ENCODE measurements at regions of chr10 and their contacts with region 1.

Region 1: GRCh38 chr10:102072673-102073527 is 7.8 kb downstream of the HPS6 start:
- DNase-seq: peak; percentile 88
- H3K4me3 ChIP-seq: no peak overlapping the region
- H3K27ac ChIP-seq: no peak overlapping the region
- H3K4me1 ChIP-seq: peaks cover 7% of the 10 kb centered on the region
- H3K27me3 ChIP-seq: no peaks in the 10 kb centered on the region
- CTCF ChIP-seq: peak; percentile 92

Region 2: DNA sequence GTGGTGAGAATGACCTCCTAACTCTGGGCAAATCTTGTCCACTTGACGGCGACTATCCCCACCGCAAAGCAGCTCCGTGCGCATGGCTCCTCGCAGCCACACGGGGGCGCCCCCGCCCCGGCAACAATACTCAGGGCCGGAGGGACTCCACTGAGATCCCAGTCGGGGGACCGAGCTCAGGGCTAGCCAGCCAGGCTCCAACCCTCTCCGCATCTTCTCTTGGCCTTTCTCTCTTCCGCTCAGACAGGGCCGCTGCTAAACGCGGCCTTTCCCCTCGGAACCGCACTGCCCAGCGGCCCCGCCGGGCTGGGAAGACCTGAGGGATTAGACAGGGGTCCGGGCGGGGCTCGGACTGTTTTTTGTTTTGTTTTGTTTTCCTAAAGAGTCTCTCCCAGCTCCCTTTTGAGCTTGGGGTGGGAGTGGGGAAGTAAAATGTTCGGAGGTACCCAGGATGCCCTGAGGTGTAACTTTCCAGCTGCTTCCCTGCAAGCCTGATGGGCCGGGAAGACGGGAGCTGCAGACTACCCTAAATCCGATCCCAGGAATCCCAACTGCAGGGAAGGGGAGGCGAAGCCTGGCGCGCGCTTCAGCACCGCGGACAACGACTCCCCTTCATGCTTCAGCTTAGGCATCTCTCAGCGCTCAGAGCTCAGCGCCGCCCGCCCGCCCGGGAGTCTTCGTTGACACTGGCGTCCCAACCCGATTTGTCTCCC is 232.0 kb before region 1 on chr10:
- intact Hi-C with region 1: loop called (anchors 2 kb)
- DNase-seq: peak; percentile 81
- H3K4me3 ChIP-seq: peak overlapping the region; percentile 24
- H3K27ac ChIP-seq: no peak overlapping the region
- H3K4me1 ChIP-seq: peaks cover 10% of the 10 kb centered on the region
- H3K27me3 ChIP-seq: no peaks in the 10 kb centered on the region
- CTCF ChIP-seq: peak; percentile 96

Region 3: GRCh38 chr10:101889256-101890210 is 183.4 kb before region 1 on chr10:
- intact Hi-C with region 1: loop called (anchors 10 kb)
- DNase-seq: peak; percentile 77
- H3K4me3 ChIP-seq: no peak overlapping the region
- H3K27ac ChIP-seq: no peak overlapping the region
- H3K4me1 ChIP-seq: no peaks in the 10 kb centered on the region
- H3K27me3 ChIP-seq: no peaks in the 10 kb centered on the region
- CTCF ChIP-seq: peak; percentile 77

Measured in colonic mucosa (tissue), 4 donors.